Right ventricle myocardium inferior (tissue), 1 donor: ENCODE measurements at regions of chr4 and their contacts with region 1.

Region 1: DNA sequence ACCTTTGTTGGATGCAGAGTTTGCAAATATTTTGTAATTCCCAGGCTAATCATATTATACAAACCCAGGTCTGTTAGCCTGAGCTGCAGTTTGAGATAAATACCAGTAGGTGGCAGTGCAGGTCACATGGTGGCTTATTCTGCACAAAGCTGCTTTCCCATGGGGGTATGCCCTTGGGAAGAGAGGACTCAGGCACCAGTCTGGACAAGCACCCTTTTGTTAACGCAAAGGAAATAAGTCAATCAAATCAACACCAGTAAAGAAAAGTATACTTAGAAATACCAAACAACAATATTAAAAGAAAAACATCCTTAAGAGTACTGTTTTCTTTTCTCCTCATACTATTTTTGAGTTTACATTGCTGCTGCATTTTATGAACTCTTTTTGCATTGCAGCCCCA is 389.0 kb upstream of the ZFP42 start:
- DNase-seq: no peak
- ATAC-seq: no peak

Region 2: DNA sequence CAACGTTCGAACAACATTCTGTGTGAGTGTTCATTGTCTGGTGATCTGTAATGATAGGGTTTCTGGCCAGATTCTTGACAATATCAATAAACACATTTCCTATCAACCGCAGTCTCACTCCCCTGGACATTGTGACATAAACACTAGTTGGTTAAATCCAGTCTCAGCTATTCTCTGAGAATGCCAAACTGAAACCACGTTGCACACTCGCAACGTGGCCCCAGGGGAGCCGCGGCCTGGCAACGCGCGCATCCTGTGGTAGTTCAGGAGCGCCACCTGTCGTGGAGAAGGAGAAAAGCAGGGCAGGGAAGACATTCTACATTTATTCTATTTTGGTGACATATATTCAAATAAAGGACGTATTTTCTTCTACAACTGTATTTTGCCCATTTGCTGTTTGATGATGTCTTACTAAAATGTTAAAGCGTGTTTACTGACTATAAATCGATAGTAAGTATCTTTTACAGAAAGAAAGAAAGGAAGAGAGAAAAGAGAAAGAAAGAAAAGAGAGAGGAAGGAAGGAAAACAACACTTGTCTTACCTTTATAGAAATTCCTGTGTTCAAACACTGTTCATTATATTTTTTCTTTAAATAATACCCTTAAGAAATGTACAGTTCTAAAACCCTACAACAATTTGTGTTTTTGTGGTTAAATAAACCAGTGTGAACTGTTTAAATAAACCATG is 1595.7 kb after region 1 on chr4:
- intact Hi-C with region 1: loop called (anchors 5 kb)
- DNase-seq: peak; percentile 83
- ATAC-seq: peak; percentile 26